CD8-positive, alpha-beta T cell (primary cell): ENCODE measurements at regions of chr6 and their contacts with region 1.

Region 1: DNA sequence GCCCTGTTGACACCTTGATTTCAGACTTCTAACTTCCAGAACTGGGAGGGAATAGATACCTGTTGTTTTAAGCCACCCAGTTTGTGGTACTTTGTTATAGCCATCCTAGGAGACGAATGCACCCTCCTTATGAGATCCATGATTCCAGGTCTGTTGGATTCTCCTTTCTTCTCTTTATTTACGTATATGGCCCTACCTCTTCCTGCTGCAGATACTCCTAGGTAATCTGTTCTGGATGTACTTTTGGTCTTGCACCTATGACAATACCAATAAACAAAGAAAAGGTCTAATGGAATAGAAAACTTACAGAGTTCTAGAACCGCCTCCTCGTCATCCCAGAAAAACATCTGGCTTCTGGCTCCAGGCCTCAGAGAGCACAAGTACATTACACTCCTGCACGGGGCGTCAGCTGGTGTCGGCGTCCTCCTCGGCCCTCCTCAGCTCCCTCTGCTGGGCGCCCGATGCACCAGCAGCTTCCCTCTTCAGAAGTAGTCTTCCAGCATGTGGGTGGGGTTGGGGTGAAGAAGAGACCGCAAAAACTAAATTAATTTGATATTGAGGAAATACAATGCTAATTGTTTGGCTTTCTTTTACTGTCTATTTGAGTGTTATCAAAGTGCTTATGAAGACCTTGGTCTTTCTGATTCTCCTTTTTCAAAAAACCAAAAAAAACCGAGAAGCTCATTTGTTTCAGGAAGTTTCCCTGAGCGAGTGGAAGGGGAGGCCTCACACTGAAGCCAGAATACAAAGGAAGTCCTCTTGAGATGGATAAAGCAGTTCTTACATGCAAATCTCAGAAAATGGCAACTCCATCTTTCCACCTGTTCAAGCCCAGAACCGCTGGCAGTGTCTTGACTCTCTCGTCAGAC is 9.7 kb upstream of the ATXN1 start:
- DNase-seq: peak; percentile 57 to 89 (median 78)
- ATAC-seq: peak; percentile 78
- H3K4me3 ChIP-seq: no peak overlapping the region
- H3K4me3 Mint-ChIP-seq: peak overlapping the region; percentile 37
- H3K27ac ChIP-seq: no peak overlapping the region
- H3K27ac Mint-ChIP-seq: peak overlapping the region; percentile 41
- H3K4me1 ChIP-seq: peaks cover 25% of the 10 kb centered on the region
- H3K4me1 Mint-ChIP-seq: peaks cover 58% of the 10 kb centered on the region
- H3K27me3 ChIP-seq: no peaks in the 10 kb centered on the region
- H3K27me3 Mint-ChIP-seq: no peaks in the 10 kb centered on the region
- CTCF ChIP-seq: peak; percentile 98

Region 2: DNA sequence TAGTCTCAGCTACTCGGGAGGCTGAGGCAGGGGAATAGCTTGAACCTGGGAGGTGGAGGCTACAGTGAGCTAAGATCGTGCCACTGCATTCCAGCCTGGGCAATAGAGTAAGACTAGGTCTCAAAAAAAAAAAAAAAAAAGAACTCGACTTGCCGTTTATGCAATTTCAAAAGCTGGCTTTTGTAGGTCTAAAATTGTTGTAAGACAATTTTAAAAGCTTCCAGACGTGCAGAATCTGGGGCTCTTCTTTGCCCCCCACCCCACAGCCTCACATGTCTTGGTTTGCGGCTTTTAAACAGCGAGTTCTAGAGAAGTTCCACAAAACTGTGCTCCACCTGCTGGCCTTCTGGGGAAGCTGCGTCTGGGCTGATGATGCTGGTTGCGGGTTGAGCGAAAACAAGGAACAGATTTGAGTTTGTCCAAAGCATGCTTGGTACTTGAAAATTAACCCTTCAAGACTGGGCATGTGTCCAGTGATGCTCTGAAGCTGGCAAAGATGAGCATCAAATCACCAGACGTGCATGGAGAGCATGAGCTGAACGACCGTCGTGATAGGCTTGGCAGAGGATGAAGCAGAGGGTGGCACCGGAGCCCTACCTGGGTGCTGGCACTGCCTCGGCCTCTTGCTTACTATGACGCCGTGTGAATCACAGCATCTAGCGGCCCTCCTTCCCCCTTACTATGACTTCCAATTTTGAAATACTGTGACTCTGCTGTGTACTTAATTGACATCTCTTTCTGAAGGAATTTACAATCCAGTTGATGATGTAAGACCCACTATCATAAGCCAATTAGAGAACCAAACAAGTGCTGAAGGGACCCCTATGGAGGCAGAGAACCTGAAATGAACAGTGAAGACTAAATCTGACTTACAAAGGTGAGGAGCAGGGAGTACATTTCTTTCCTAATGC is 361.1 kb before region 1 on chr6:
- CTCF ChIA-PET with region 1: interaction called, 4 read pairs
- POLR2A ChIA-PET with region 1: no interaction called
- intact Hi-C with region 1: loop called in 1 of 2 experiments (anchors 5 kb)
- DNase-seq: peak; percentile 8 to 76 (median 60)
- ATAC-seq: peak; percentile 67
- H3K4me3 ChIP-seq: no peak overlapping the region
- H3K4me3 Mint-ChIP-seq: no peak overlapping the region
- H3K27ac ChIP-seq: no peak overlapping the region
- H3K27ac Mint-ChIP-seq: peak overlapping the region; percentile 7
- H3K4me1 ChIP-seq: no peaks in the 10 kb centered on the region
- H3K4me1 Mint-ChIP-seq: peaks cover 26% of the 10 kb centered on the region
- H3K27me3 ChIP-seq: no peaks in the 10 kb centered on the region
- H3K27me3 Mint-ChIP-seq: no peaks in the 10 kb centered on the region
- CTCF ChIP-seq: peak; percentile 66

Region 3: DNA sequence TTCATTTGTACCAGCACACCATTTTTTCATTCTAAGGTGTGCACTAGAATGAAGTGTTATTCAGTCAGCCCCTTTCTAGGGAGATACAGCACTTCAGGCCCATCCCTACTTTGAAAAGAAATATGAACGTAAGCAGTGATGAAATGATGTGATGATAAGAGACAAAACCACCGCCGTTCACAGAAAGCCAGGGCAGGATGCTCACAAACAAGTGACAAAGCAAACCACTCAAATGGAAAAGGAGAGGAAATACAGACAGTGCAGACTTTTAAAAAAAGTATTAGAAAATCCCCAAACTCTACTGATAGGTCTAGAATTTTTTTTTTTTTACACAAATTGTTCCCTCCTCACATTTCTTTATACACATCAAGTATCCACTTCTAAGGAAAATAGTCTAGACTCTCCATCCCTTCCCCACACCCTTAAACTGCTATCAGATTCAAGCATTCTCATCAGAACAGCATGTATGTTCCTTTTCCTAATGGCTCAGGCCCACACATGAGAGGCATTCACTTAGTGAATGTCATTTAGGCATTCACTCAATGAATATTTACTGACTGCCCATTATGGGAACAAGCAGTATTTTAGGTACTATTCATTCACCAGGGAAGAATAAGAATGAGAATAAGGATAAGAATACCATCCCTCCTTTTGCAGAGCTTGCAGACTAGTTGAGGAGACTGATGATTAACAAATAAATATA is 289.1 kb before region 1 on chr6:
- CTCF ChIA-PET with region 1: no interaction called
- POLR2A ChIA-PET with region 1: no interaction called
- intact Hi-C with region 1: loop called in 1 of 2 experiments (anchors 2 kb)
- DNase-seq: peak; percentile 30 to 95 (median 61)
- ATAC-seq: peak; percentile 81
- H3K4me3 ChIP-seq: no peak overlapping the region
- H3K4me3 Mint-ChIP-seq: peak overlapping the region; percentile 52
- H3K27ac ChIP-seq: peak overlapping the region; percentile 28 to 83
- H3K27ac Mint-ChIP-seq: peak overlapping the region; percentile 95
- H3K4me1 ChIP-seq: peaks cover 61% of the 10 kb centered on the region
- H3K4me1 Mint-ChIP-seq: peaks cover 77% of the 10 kb centered on the region
- H3K27me3 ChIP-seq: no peaks in the 10 kb centered on the region
- H3K27me3 Mint-ChIP-seq: no peaks in the 10 kb centered on the region
- CTCF ChIP-seq: no peak

Region 4: DNA sequence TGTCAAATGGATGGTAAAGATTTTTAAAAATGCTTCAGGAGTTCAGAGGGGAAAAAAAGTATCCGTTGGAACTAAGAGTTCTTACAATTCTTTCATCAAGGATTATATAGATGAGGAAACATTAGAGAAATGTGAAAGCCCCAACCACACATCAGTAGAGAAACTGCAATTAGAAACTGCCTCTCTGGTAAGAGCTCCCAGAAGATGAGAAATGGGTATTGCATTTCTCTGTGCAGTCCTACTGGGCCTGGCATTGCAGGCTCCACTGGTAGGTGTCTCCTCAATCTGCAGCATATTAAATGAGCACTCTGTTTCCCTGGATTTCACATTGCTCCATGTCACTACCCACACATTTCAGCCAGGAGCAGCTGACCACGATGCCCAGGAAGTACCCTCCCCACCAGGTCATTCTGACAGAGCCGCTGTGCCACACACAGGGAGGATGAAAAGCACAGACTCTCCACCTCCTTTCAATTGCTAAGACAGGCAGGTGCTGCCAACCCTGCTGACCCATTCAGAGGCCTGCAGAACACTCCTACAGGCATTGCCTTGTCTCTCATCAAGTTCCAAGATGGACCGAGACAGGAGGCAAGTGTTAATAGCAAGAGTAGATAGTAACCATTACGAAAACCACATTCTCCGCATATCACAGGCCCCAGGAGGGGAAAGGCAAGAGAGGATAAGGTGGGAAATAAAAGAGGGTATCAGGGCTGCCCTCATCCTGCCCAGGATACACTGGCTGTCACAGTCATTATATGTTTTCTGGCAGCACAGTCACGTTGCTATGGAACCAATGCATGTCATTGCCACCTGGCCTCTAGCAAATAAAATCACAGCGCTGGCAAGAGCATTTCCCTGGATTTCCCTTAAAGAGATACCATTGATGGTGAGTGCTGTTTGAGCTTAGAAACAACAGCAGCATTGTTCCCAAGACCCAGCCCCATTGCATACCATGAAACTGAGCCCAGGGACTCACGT is 251.4 kb before region 1 on chr6:
- CTCF ChIA-PET with region 1: interaction called, 9 read pairs
- POLR2A ChIA-PET with region 1: no interaction called
- intact Hi-C with region 1: loop called in 1 of 2 experiments (anchors 5 kb)
- DNase-seq: no peak
- ATAC-seq: no peak
- H3K4me3 ChIP-seq: no peak overlapping the region
- H3K4me3 Mint-ChIP-seq: no peak overlapping the region
- H3K27ac ChIP-seq: no peak overlapping the region
- H3K27ac Mint-ChIP-seq: no peak overlapping the region
- H3K4me1 ChIP-seq: peaks cover 6% of the 10 kb centered on the region
- H3K4me1 Mint-ChIP-seq: peaks cover 36% of the 10 kb centered on the region
- H3K27me3 ChIP-seq: no peaks in the 10 kb centered on the region
- H3K27me3 Mint-ChIP-seq: no peaks in the 10 kb centered on the region
- CTCF ChIP-seq: no peak

Region 5: DNA sequence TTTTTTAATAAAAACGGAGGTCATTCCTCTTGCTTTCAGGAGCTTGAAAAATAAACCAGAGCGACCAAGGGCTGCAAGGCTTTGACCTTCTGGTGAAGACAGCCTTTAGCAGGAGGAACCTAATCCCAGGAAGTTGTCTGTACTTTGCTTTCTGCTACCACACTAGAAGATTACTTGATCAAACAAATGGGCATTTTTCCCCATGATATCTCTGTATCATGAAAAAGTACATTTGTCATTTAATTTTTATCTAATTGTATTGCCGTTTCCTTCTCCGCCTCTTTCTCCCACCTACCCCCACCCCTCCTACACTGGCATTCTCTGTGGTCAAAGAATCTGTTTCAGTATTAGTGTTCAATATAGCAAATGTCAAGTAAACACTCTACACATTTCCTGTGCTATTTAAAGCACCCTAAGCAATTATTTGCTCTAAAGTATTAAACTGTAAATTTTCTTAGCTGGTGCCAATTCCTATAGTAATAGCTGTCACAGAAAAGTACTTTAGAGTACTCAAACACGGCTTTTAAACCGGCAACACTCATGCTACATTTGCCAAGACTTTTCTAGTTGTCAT is 39.4 kb before region 1 on chr6:
- CTCF ChIA-PET with region 1: interaction called, 6 read pairs
- POLR2A ChIA-PET with region 1: no interaction called
- intact Hi-C with region 1: loop called (anchors 1 to 5 kb)
- DNase-seq: peak in 3 of 9 experiments; percentile 32 to 74 (median 43)
- ATAC-seq: peak; percentile 64
- H3K4me3 ChIP-seq: peak overlapping the region in 1 of 2 experiments; percentile 39
- H3K4me3 Mint-ChIP-seq: peak overlapping the region; percentile 64
- H3K27ac ChIP-seq: peak overlapping the region in 1 of 2 experiments; percentile 77
- H3K27ac Mint-ChIP-seq: peak overlapping the region; percentile 82
- H3K4me1 ChIP-seq: no peaks in the 10 kb centered on the region
- H3K4me1 Mint-ChIP-seq: peaks cover 45% of the 10 kb centered on the region
- H3K27me3 ChIP-seq: no peaks in the 10 kb centered on the region
- H3K27me3 Mint-ChIP-seq: no peaks in the 10 kb centered on the region
- CTCF ChIP-seq: no peak

Region 6: GRCh38 chr6:16741112-16742016 is 29.6 kb before region 1 on chr6:
- CTCF ChIA-PET with region 1: interaction called, 22 read pairs
- POLR2A ChIA-PET with region 1: no interaction called
- intact Hi-C with region 1: loop called in 1 of 2 experiments (anchors 5 kb)
- DNase-seq: peak in 2 of 9 experiments; percentile 43 to 63
- ATAC-seq: peak; percentile 66
- H3K4me3 ChIP-seq: no peak overlapping the region
- H3K4me3 Mint-ChIP-seq: no peak overlapping the region
- H3K27ac ChIP-seq: no peak overlapping the region
- H3K27ac Mint-ChIP-seq: peak overlapping the region; percentile 20
- H3K4me1 ChIP-seq: peaks cover 4% of the 10 kb centered on the region
- H3K4me1 Mint-ChIP-seq: peaks cover 69% of the 10 kb centered on the region
- H3K27me3 ChIP-seq: no peaks in the 10 kb centered on the region
- H3K27me3 Mint-ChIP-seq: no peaks in the 10 kb centered on the region
- CTCF ChIP-seq: no peak